B cell (primary cell): ENCODE measurements at regions of chr2 and their contacts with region 1.

Region 1: GRCh38 chr2:181312515-181312927 is 144.7 kb upstream of the ITGA4 start:
- DNase-seq: peak; percentile 80
- ATAC-seq: peak; percentile 59
- H3K4me3 ChIP-seq: peak overlapping the region in 4 of 5 experiments; percentile 7 to 38 (median 16)
- H3K4me3 Mint-ChIP-seq: peak overlapping the region; percentile 73
- H3K27ac ChIP-seq: peak overlapping the region; percentile 93 to 96
- H3K27ac Mint-ChIP-seq: peak overlapping the region; percentile 92
- H3K4me1 ChIP-seq: peaks cover 54 to 65% of the 10 kb centered on the region in 2 donors
- H3K4me1 Mint-ChIP-seq: peaks cover 53% of the 10 kb centered on the region
- H3K27me3 ChIP-seq: no peaks in the 10 kb centered on the region
- H3K27me3 Mint-ChIP-seq: no peaks in the 10 kb centered on the region
- CTCF ChIP-seq: no peak

Region 2: GRCh38 chr2:181290182-181290581 is 22.3 kb before region 1 on chr2:
- CTCF ChIA-PET with region 1: no interaction called
- POLR2A ChIA-PET with region 1: no interaction called
- intact Hi-C with region 1: no loop called
- DNase-seq: no peak
- ATAC-seq: no peak
- H3K4me3 ChIP-seq: no peak overlapping the region
- H3K4me3 Mint-ChIP-seq: no peak overlapping the region
- H3K27ac ChIP-seq: no peak overlapping the region
- H3K27ac Mint-ChIP-seq: no peak overlapping the region
- H3K4me1 ChIP-seq: no peaks in the 10 kb centered on the region
- H3K4me1 Mint-ChIP-seq: no peaks in the 10 kb centered on the region
- H3K27me3 ChIP-seq: no peaks in the 10 kb centered on the region
- H3K27me3 Mint-ChIP-seq: no peaks in the 10 kb centered on the region
- CTCF ChIP-seq: no peak

Region 3: GRCh38 chr2:181354626-181355025 is 42.1 kb after region 1 on chr2:
- CTCF ChIA-PET with region 1: interaction called, 7 read pairs
- POLR2A ChIA-PET with region 1: no interaction called
- intact Hi-C with region 1: loop called (anchors 5 kb)
- DNase-seq: no peak
- ATAC-seq: no peak
- H3K4me3 ChIP-seq: no peak overlapping the region
- H3K4me3 Mint-ChIP-seq: no peak overlapping the region
- H3K27ac ChIP-seq: no peak overlapping the region
- H3K27ac Mint-ChIP-seq: no peak overlapping the region
- H3K4me1 ChIP-seq: peaks cover 18 to 23% of the 10 kb centered on the region in 2 donors
- H3K4me1 Mint-ChIP-seq: peaks cover 28% of the 10 kb centered on the region
- H3K27me3 ChIP-seq: no peaks in the 10 kb centered on the region
- H3K27me3 Mint-ChIP-seq: no peaks in the 10 kb centered on the region
- CTCF ChIP-seq: no peak

Region 4: GRCh38 chr2:181411105-181411849 is 98.8 kb after region 1 on chr2:
- CTCF ChIA-PET with region 1: interaction called, 7 read pairs
- POLR2A ChIA-PET with region 1: no interaction called
- intact Hi-C with region 1: loop called (anchors 2 kb)
- DNase-seq: peak; percentile 86
- ATAC-seq: peak; percentile 97
- H3K4me3 ChIP-seq: peak overlapping the region in 2 of 5 experiments; percentile 6 to 46
- H3K4me3 Mint-ChIP-seq: peak overlapping the region; percentile 56
- H3K27ac ChIP-seq: peak overlapping the region; percentile 59
- H3K27ac Mint-ChIP-seq: peak overlapping the region; percentile 89
- H3K4me1 ChIP-seq: peaks cover 35 to 47% of the 10 kb centered on the region in 2 donors
- H3K4me1 Mint-ChIP-seq: peaks cover 81% of the 10 kb centered on the region
- H3K27me3 ChIP-seq: no peaks in the 10 kb centered on the region
- H3K27me3 Mint-ChIP-seq: no peaks in the 10 kb centered on the region
- CTCF ChIP-seq: no peak

Region 5: DNA sequence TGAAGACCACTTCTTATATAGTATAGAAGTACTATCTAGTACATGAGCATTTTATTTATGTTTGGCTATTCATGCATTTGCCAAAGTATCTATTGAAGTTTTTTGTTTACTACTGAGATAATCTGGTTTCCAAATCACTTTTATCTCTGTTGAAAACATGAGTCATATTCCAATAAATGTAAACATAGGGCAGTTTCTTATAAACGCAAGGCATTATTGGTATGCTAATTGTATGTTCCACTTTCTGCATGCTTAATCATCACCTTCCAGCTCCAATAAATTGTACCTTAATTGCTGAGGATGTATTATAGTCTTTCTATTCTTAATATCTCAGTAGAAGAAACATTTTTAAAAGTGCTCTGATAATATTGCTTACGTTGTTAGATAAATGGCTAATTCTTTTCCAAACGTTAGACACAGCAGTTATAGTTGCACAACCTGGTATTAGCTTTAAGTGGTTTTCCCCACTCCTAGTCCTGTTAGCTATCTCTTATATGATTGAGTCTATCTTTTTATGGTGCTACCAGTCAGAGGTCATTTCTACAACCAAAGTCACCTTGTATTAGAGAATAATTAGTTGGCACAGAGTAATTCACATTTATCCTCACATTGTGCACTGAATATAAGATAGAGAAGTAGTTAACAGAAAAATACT is 161.8 kb after region 1 on chr2:
- CTCF ChIA-PET with region 1: no interaction called
- POLR2A ChIA-PET with region 1: no interaction called
- intact Hi-C with region 1: no loop called
- DNase-seq: no peak
- ATAC-seq: no peak
- H3K4me3 ChIP-seq: no peak overlapping the region
- H3K4me3 Mint-ChIP-seq: no peak overlapping the region
- H3K27ac ChIP-seq: peak overlapping the region in 1 of 2 donors; percentile 68
- H3K27ac Mint-ChIP-seq: no peak overlapping the region
- H3K4me1 ChIP-seq: peaks cover 28 to 34% of the 10 kb centered on the region in 2 donors
- H3K4me1 Mint-ChIP-seq: peaks cover 47% of the 10 kb centered on the region
- H3K27me3 ChIP-seq: no peaks in the 10 kb centered on the region
- H3K27me3 Mint-ChIP-seq: no peaks in the 10 kb centered on the region
- CTCF ChIP-seq: no peak